HAP-1 (cell line): ENCODE measurements at regions of chr3 and their contacts with region 1.

Region 1: DNA sequence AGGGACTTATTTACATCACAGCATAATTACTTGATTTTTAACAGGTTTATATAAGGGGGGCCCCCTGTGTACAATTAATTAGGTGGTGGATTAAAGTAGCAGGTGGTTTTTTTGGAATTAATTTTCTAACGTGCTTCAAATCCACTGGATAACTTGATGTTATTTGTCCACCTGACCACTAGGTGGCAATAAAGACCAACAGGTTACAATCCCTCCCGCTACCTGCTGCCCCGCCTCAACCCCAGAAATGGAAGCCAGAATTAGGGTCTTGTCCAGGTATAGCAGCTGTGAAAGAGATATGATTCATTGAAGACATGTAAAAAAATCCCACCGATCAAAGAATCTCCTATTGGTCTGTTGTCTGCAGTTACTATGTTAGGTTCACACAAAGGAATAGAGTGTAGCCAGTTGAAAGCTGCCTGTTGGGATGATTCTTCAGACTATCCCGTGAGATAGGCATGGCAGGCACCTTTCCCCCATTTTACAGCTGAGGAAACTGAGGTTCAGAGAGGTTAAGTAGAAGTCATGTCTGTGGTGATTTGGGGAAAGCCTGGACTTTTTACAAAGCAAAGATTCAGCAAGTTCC is 44.0 kb downstream of the MFSD1 start:
- DNase-seq: peak; percentile 52 to 59
- H3K4me3 ChIP-seq: no peak overlapping the region
- H3K4me1 ChIP-seq: no peaks in the 10 kb centered on the region
- H3K27me3 ChIP-seq: no peaks in the 10 kb centered on the region

Region 2: DNA sequence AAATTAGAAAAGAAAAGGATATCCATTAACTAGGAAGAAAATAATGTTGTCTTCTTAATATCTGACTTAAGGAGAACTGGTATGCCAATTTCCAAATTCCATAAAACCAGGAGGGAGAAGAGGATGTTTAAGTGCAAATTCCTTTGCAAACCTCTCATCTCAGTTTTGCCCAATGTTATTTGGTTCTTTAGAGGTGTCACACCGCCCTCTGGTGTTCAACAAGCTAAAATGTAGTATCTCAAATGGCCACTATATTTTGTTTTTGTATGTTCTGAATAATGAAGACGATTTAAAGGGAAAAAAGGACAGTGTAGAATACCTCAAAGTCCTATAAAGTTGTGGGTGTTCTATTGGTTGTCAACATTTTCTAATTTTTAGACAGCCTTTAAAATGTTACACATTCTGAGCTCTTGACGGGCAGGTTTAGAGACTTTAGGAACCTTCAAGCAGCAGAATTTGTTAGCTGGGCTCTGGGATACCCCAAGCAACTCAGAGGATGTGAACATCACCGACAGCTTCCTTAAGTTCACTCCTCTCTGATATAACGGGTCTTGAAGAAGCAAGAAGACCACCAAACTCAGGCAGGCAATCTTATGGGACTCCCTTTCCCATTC is 414.3 kb after region 1 on chr3:
- in situ Hi-C with region 1: loop called (anchors 5 kb)
- DNase-seq: peak; percentile 51 to 67
- H3K4me3 ChIP-seq: no peak overlapping the region
- H3K4me1 ChIP-seq: no peaks in the 10 kb centered on the region
- H3K27me3 ChIP-seq: no peaks in the 10 kb centered on the region